Right ventricle myocardium inferior (tissue), 1 donor: ENCODE measurements at regions of chr16 and their contacts with region 1.

Region 1: DNA sequence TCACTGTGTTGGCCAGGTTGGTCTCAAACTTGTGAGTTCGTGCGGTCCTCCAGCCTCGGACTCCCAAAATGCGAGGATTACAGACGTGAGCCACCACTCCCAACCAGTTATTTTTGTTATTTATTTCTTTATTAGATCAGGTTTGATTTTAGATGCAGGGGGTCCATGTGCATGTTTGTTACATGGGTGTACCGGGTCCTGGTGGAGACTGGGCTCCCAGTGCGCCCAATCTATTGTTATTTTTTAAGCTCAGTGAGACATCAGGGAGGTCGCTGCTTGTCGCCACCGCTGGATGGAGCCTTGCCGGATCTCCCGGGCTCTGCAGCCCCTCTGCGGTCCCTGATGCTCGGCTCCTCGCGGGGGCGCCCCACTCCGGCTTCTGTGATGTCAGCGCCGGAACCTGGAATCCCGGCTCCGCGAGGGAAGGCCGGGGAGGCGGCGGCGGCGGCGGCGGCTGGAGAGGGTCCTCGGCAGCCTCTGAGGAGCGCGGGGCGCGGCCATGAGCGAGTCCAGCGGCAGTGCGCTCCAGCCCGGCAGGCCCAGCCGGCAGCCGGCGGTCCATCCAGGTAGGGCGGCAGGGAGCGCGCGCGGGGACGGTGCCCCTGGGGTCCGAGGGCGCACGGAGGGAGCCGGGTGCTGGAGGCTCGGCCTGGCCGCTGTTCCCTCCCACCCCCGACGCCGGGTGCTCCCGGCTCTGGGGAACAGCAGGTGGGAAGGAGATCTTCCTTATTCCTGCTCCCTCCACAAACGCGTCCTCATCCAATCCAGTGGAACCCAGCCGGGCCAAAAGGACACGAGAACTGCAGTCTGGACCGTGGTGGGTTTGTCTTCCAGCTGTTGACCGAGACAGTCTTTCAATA is at the start of gene TMC7:
- DNase-seq: peak; percentile 81
- ATAC-seq: peak; percentile 93
- total RNA-seq, gene TMC7: 1.3 TPM

Region 2: GRCh38 chr16:18841833-18842525 is 141.8 kb before region 1 on chr16:
- intact Hi-C with region 1: no loop called
- DNase-seq: no peak
- ATAC-seq: no peak

Region 3: GRCh38 chr16:19029980-19030379 is 46.2 kb after region 1 on chr16:
- intact Hi-C with region 1: no loop called
- DNase-seq: no peak
- ATAC-seq: no peak

Region 4: DNA sequence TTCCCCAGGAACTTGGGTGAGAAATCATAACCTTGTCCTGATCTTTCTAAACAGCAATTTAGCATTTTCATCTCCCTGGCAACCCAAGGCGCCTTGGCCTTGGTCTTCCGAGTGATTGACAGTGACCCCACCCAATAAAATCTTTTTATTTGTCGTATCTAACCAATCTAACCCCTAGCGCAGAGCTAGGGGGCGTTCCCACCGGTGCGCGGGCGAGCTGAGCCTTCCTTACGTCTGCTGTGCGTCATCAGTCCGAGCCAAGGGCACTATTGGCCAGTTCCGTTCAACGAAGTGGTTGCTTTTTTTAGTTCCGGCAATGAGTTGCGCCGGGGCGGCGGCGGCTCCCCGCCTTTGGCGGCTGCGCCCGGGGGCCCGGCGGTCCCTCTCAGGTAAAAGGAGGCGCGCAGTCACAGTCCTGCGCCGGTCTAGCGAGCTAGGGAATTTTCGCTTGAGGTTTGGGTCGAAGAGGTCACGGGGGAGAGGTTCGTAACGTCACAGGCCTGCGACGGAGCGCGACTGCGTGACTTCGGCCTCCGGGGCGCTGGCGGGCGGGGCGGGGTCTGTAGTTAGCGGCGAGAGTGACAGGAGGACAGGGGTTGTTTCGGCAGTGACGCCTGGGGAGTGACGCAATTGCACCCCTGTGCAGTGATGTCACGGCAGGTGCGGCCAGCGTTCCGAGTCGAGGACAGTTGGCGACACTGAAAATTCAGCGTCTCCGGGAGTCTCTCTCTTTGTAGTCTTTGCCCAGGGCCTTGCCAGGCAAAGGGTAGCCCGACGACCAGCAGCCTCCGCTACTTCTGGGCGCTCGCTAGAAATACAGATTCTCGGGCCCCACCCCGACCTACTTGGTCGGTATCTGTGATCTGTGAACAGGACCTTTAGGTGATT is 83.8 kb after region 1 on chr16 and contains the start of gene COQ7:
- intact Hi-C with region 1: loop called (anchors 2 kb)
- DNase-seq: peak; percentile 99
- ATAC-seq: peak; percentile 98
- total RNA-seq, gene COQ7: 40.4 TPM

Region 5: GRCh38 chr16:19375561-19376158 is 391.9 kb after region 1 on chr16:
- intact Hi-C with region 1: loop called (anchors 10 kb)
- DNase-seq: no peak
- ATAC-seq: no peak